ENCODE measurements at regions of chr11 and their contacts with region 1.

Region 1: DNA sequence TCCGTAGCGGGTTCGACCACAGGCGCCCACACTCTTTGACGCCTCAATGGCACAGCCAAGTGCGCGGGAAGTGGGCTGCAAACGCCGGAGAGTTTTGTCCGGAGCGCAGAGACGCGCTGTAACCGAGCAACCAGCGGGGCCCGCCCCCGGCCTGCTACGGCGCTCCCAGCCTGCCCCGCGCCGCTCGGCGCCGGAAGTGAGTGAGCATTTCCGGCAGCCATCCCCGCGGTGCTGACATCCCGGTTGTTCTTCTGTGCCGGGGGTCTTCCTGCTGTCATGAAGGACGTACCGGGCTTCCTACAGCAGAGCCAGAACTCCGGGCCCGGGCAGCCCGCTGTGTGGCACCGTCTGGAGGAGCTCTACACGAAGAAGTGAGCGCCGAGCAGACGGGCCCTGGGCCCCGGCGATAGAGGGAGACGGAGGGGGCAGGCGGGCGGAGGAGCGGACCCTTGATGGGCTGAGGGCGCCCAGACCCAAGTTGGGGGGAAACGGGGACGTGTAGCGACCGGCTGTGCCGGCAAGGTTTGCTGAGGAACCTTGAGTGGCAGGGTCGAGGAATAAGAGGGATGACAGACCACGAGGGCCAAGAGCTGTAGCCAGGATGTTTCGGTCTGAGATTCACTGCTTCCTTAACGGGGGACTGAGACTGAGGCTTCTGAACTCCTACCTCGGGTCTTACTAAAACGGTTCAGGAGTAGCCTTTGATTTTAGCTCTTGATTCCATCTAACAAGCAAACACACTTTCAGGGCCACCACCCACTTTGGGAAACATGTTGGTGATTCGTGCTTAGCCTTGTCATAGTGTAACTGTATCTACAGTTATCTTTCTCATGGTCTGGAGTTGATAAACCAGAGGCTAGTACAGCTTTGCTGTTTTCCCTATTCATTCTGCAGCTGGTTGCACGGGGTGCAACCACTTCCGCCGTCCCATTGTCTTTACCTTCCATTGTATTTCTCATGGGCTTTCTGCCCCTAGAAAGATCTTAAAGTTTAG is at the start of gene PSMD13:
- DNase-seq: peak; percentile 96
- ATAC-seq: peak; percentile 86
- H3K4me3 Mint-ChIP-seq: peak within 1 kb of the TSS; percentile 92
- H3K27ac Mint-ChIP-seq: peak within 1 kb of the TSS; percentile 99
- H3K4me1 Mint-ChIP-seq: peaks cover 48% of the 10 kb centered on the region
- H3K27me3 Mint-ChIP-seq: no peaks in the 10 kb centered on the region
- total RNA-seq, gene PSMD13: 134 to 212 TPM

Region 2: DNA sequence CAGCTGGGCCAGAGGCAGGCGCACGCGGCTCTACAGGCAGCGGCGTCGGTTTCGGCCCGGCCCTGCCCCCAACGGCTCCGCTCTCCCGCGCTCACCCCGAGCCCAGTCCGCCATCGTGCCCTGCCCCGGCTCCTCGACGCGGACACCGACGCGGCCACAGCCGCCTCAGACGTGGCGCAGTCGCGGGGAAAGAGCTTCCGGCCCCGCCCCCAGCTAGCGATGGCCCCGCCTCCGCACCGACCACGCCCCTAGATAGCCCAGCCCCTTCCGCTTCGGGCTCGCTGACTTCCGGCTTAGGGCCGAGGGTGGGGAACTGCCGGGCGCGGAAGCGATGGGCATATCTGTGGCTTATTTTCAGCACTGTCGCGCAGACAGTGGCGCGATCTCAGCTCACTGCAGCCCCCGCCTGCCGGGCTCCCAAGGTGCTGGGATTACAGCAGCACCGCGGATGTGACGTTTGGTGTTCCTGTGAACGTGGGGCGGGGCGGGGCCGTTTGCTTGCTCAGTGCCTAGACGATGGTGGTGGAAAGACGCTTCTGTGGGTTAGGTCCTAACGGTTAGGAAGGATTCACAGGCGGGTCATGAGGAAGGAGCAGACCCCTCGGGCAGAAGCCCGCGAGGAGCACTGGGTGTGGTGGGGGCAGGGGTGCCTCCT is 29.7 kb before region 1 on chr11 and contains the starts of genes BET1L and RIC8A:
- CTCF ChIA-PET with region 1: interaction called, 4 read pairs
- POLR2A ChIA-PET with region 1: interaction called, 25 read pairs
- intact Hi-C with region 1: loop called (anchors 1 kb)
- DNase-seq: peak; percentile 99
- ATAC-seq: peak; percentile 89
- H3K4me3 Mint-ChIP-seq: peak within 1 kb of the TSS; percentile 94
- H3K27ac Mint-ChIP-seq: peak within 1 kb of the TSS; percentile 99
- H3K4me1 Mint-ChIP-seq: peaks cover 56% of the 10 kb centered on the region
- H3K27me3 Mint-ChIP-seq: no peaks in the 10 kb centered on the region
- total RNA-seq, gene BET1L: 45.5 to 49.4 TPM
- total RNA-seq, gene RIC8A: 104 to 124 TPM

Region 3: DNA sequence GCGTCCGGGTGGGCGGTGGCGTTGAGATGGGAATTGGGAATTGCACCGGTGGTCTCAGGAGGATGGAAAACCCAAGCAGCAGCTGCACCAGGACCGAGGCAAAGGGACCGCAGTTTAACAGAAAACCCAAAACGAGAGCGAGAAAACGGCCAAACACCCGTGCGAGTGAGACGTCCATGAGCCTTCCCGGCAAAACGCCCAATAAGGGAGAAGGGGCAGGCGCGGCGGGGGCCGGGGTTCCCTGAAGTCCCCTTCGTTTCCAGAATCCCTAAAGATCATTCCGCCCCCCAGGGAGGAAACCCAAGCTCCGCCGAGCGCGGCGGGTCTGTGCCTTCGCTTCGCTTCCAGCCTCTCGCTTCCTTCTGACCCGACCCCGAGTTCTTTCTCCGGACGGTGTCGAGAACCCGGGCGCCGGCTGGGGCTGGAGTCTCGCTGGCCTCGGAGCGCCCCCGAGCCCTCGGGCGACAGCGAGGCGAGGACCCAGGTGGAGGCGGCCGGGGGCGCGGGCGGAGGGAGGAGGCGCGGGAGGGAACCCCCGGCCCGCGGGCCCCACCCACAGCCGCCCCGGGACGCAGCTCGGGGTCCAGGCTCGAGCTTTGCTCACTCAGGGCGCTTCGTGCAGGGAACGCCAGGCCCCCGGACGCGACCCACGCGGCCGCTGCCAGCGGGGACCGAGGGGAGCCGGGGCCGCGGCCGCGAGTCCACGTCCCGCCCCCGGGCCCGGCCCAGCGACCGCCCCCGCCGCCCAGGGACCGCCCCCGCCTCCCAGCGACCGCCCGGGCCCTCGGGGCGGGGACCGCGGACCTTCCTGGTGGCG is 51.5 kb after region 1 on chr11 and contains the start of gene PGGHG:
- CTCF ChIA-PET with region 1: no interaction called
- POLR2A ChIA-PET with region 1: no interaction called
- intact Hi-C with region 1: loop called (anchors 1 to 5 kb)
- DNase-seq: peak; percentile 62
- ATAC-seq: peak; percentile 17
- H3K4me3 Mint-ChIP-seq: peak within 1 kb of the TSS; percentile 83
- H3K27ac Mint-ChIP-seq: peak within 1 kb of the TSS; percentile 92
- H3K4me1 Mint-ChIP-seq: peaks cover 29% of the 10 kb centered on the region
- H3K27me3 Mint-ChIP-seq: no peaks in the 10 kb centered on the region
- total RNA-seq, gene PGGHG: 73.4 to 82.3 TPM

Region 4: DNA sequence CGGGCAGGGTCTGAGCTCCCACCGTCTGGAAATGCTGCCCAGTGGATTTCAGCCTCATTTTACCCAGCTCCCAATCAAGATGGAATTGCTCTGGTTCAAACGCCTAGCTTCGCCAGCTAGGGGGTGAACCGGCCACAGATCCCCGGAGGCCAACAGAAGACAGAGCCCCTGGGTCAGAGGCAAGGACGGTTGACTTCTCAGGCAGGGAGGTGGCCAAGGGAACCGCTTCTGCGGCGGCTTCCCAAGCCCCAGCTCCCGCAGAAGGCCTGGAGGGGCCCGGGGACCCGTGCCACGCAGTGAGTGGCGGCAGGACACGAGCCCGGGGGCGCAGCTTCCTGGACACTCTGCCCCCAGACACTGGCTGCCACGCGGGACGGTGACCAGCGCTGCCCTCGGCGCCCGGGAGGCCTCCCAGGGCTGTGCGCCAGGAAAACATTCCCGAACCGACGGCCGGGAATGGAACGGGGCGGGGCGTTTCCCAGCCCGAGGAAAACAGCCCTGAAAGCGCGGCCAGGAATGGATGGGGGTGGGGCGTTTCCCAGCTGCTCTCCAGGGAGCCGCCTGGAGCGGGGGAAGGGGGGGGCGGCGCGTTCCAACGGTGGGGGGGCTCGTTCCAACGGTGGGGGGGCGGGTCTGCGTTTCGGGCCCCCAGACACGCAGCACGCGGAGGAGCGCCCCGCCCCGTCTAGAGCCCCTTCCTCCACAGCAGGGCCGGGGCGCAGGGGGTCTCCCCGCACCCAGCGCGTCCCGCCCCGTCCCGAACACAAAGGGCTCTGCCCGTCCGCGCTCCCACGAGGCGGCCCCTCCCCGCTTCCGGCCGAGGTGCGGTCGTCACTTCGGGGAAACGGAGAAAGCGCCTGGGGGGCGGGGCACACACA is 118.7 kb after region 1 on chr11:
- CTCF ChIA-PET with region 1: interaction called, 3 read pairs
- POLR2A ChIA-PET with region 1: no interaction called
- intact Hi-C with region 1: loop called (anchors 1 to 5 kb)
- DNase-seq: peak; percentile 94
- ATAC-seq: peak; percentile 63
- H3K4me3 Mint-ChIP-seq: no peak overlapping the region
- H3K27ac Mint-ChIP-seq: peak overlapping the region; percentile 96
- H3K4me1 Mint-ChIP-seq: peaks cover 47% of the 10 kb centered on the region
- H3K27me3 Mint-ChIP-seq: no peaks in the 10 kb centered on the region

Region 5: GRCh38 chr11:568306-569157 is 331.5 kb after region 1 on chr11:
- CTCF ChIA-PET with region 1: no interaction called
- POLR2A ChIA-PET with region 1: no interaction called
- intact Hi-C with region 1: loop called in 1 of 2 experiments (anchors 1 kb)
- DNase-seq: peak; percentile 97
- ATAC-seq: peak; percentile 93
- H3K4me3 Mint-ChIP-seq: peak overlapping the region; percentile 88
- H3K27ac Mint-ChIP-seq: peak overlapping the region; percentile 72
- H3K4me1 Mint-ChIP-seq: no peaks in the 10 kb centered on the region
- H3K27me3 Mint-ChIP-seq: no peaks in the 10 kb centered on the region

Region 6: DNA sequence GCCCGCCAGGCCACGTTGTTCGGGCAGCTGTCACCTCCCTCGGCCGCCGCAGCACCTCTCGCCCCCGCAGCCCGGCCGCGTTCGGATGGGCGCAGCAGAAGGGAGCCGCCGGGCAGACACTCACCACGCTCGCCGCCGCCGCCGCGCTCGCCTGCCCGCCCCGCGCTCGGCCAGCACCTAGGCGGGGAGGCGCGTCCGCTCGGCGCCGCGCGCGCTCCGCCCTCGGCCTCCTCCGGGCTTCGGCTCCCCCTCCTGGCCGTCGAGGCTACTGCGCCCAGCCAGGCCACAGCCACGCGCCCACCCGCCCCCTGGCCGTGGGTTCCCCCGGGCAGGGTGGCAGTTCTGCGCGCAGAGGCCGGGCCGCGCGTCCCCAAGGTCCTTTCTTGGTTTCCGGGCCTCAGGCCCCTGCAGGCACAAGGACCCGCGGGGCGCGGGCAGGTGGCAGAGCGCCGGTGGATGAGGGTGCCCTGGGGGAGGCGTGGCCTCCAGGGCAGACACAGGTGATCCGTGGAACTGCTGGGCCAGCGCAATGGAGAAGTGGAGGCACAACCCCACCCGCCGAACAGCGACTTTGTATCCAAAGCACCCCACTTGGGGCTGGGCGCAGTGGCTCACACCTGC is 561.1 kb after region 1 on chr11 and contains the start of gene SLC25A22:
- CTCF ChIA-PET with region 1: no interaction called
- POLR2A ChIA-PET with region 1: no interaction called
- intact Hi-C with region 1: loop called in 1 of 2 experiments (anchors 1 kb)
- DNase-seq: peak; percentile 92
- ATAC-seq: peak; percentile 63
- H3K4me3 Mint-ChIP-seq: peak within 1 kb of the TSS; percentile 79
- H3K27ac Mint-ChIP-seq: peak within 1 kb of the TSS; percentile 67
- H3K4me1 Mint-ChIP-seq: peaks cover 13% of the 10 kb centered on the region
- H3K27me3 Mint-ChIP-seq: no peaks in the 10 kb centered on the region
- total RNA-seq, gene SLC25A22: 33.9 to 36.6 TPM

Measured in activated CD4-positive, alpha-beta T cell treated with anti-CD3 and anti-CD28 coated beads for 36 hours (primary cell).